CD8-positive, alpha-beta T cell (primary cell): ENCODE measurements at regions of chr5 and their contacts with region 1.

Region 1: GRCh38 chr5:160439205-160439600 is 17.5 kb downstream of the PTTG1 start:
- DNase-seq: peak; percentile 77 to 94 (median 89)
- ATAC-seq: peak; percentile 84
- H3K4me3 ChIP-seq: peak overlapping the region; percentile 66 to 72
- H3K4me3 Mint-ChIP-seq: peak overlapping the region; percentile 91
- H3K27ac ChIP-seq: peak overlapping the region; percentile 47 to 64
- H3K27ac Mint-ChIP-seq: peak overlapping the region; percentile 87
- H3K4me1 ChIP-seq: no peaks in the 10 kb centered on the region
- H3K4me1 Mint-ChIP-seq: peaks cover 7% of the 10 kb centered on the region
- H3K27me3 ChIP-seq: no peaks in the 10 kb centered on the region
- H3K27me3 Mint-ChIP-seq: peaks cover 10% of the 10 kb centered on the region
- CTCF ChIP-seq: peak; percentile 66

Region 2: DNA sequence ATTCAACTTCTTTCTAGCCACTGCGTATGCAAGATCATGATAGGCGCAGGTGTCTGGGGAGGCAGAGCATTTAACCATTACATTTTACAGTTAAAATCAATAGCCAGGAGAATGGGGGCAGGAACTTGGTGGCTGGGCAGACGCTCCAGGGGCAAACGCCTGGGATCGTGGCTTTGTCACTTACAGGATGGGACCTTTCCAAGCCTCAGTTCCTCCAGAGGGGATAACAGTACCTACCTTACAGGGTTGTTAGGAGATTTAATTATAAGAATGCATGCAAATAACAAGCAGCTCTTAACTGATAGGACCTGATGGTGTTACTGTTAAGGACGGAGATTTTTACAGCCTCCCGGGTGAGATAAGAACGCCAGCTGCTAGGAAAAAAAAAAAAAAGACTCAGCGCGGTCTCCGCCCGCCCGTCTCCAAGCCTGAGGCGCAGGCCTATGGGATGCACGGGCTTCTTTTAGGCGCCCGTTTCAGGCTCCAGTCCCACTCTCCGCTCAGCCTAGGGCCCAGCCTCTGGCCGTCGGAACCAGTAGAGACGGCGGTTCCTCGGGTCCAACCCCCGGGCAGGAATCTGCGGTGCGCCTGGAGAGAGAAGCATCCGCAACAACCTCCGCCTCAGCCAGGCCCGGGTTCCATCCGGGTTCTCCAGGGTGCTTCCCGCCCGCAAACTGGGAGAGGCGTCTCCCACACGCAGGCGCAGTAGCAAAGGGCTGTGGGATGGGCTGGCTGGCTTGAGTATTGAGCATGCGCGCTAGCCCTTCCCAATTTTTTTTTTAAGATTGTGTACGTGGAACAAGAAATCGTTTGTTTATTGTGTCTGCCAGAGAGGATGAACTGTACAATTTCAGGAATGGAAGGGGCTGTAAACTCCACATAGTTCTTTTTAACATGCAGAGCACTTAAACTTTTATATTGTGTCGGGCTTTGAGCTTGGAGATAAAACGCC is 39.5 kb before region 1 on chr5 and contains the start of gene FAM200C:
- CTCF ChIA-PET with region 1: interaction called, 10 read pairs
- POLR2A ChIA-PET with region 1: no interaction called
- intact Hi-C with region 1: no loop called
- DNase-seq: peak; percentile 15 to 85 (median 57)
- ATAC-seq: peak; percentile 73
- H3K4me3 ChIP-seq: peak within 1 kb of the TSS; percentile 60 to 86
- H3K4me3 Mint-ChIP-seq: peak within 1 kb of the TSS; percentile 91
- H3K27ac ChIP-seq: peak within 1 kb of the TSS; percentile 27 to 54
- H3K27ac Mint-ChIP-seq: peak within 1 kb of the TSS; percentile 57
- H3K4me1 ChIP-seq: peaks cover 7% of the 10 kb centered on the region
- H3K4me1 Mint-ChIP-seq: peaks cover 18% of the 10 kb centered on the region
- H3K27me3 ChIP-seq: no peaks in the 10 kb centered on the region
- H3K27me3 Mint-ChIP-seq: no peaks in the 10 kb centered on the region
- CTCF ChIP-seq: no peak
- total RNA-seq, gene FAM200C: 0.14 TPM in 1 of 2 experiments, not detected in the other

Region 3: DNA sequence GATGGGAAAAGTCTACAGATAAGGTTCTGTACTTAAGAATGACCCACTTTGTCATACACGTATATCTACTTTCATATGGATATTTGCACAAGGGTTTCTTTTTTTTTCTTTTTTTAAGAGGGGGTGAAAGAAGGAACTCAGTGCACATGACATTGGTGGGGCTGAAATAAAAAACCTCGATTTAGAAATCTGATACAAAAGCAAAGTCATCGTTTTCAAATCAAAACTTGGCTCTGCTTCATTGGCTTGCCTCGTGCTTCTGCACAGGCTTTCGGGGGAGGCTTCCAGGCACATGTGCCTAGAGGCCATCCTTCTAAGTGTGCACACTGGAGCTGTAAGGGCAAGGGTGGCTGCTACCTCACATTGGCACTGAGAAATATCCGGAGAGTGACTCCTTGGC is 13.6 kb after region 1 on chr5:
- CTCF ChIA-PET with region 1: interaction called, 14 read pairs
- POLR2A ChIA-PET with region 1: no interaction called
- intact Hi-C with region 1: no loop called
- DNase-seq: no peak
- ATAC-seq: no peak
- H3K4me3 ChIP-seq: no peak overlapping the region
- H3K4me3 Mint-ChIP-seq: no peak overlapping the region
- H3K27ac ChIP-seq: no peak overlapping the region
- H3K27ac Mint-ChIP-seq: no peak overlapping the region
- H3K4me1 ChIP-seq: no peaks in the 10 kb centered on the region
- H3K4me1 Mint-ChIP-seq: peaks cover 3% of the 10 kb centered on the region
- H3K27me3 ChIP-seq: no peaks in the 10 kb centered on the region
- H3K27me3 Mint-ChIP-seq: peaks cover 13% of the 10 kb centered on the region
- CTCF ChIP-seq: no peak

Region 4: DNA sequence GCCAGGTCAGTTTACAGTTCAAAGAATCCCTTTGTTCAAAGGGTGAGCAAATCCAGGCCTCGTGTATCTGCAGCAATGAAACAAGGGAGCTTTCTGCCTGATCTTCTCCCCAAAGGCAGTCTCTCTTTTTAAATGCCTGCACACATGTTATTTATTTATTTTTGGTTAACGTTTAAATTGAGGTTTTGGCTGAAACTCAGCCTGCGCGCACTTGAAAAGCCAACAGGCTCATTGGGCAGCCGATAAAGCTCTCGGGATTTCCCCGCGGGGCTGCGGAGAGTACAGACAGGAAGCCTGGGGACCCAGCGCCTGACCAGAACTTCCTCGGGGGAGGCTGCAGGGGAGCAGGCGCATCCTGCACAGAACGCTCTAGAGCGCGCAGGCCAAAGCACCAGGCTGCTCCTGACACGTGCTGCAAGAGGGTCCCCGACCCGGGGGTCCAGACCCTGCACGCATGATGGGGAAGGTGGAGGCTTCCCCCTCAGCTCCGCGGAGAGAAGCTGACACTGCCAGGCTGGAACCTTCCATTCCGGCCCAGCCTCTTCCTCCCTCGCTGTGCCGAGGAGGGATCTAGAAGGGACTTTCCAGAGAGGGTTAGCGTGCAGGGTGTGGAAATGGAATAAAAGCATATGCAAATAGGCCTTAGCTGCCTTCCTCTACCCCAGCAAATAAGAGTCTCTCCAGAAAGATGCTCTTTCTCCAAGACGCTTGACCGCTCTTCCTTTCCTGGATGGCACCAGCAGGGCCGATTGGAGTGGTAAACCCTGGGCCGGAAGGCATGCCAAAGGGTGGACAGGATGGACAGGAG is 28.6 kb after region 1 on chr5:
- CTCF ChIA-PET with region 1: interaction called, 37 read pairs
- POLR2A ChIA-PET with region 1: interaction called, 3 read pairs
- intact Hi-C with region 1: loop called in 1 of 2 experiments (anchors 1 kb)
- DNase-seq: peak; percentile 41 to 90 (median 76)
- ATAC-seq: peak; percentile 83
- H3K4me3 ChIP-seq: peak overlapping the region; percentile 67 to 70
- H3K4me3 Mint-ChIP-seq: peak overlapping the region; percentile 86
- H3K27ac ChIP-seq: peak overlapping the region; percentile 44 to 77
- H3K27ac Mint-ChIP-seq: peak overlapping the region; percentile 90
- H3K4me1 ChIP-seq: peaks cover 33% of the 10 kb centered on the region
- H3K4me1 Mint-ChIP-seq: peaks cover 62% of the 10 kb centered on the region
- H3K27me3 ChIP-seq: no peaks in the 10 kb centered on the region
- H3K27me3 Mint-ChIP-seq: no peaks in the 10 kb centered on the region
- CTCF ChIP-seq: no peak

Region 5: DNA sequence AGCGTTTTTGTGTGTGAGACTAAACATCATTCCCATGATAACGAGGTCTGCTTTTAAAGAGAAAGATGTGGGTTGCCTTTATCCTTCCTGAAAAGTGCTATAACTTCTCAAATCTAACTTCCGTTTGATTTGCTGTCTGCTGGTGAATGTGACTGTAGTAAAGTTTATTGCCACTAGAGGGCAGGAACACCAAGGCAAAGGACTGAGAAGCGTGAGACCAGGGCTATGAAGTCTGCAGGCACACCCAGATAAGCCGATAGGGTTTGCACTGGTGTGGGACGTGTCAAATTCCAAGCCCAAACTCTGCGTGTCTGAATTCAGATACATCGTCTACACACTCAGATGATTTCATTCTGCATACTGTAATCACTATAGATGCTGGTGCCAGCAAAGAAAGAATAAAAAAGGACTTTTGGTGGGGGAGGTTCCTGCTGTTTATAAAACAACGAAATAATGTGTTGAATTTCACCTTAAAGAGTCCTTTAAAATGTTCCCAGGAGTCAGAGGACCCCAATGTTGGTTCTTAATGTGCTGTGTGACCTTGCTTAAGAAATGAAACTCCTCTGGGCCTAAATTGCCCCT is 69.7 kb after region 1 on chr5:
- CTCF ChIA-PET with region 1: interaction called, 50 read pairs
- POLR2A ChIA-PET with region 1: no interaction called
- intact Hi-C with region 1: loop called (anchors 1 kb)
- DNase-seq: peak; percentile 10 to 90 (median 59)
- ATAC-seq: peak; percentile 86
- H3K4me3 ChIP-seq: no peak overlapping the region
- H3K4me3 Mint-ChIP-seq: no peak overlapping the region
- H3K27ac ChIP-seq: peak overlapping the region in 1 of 2 experiments; percentile 1
- H3K27ac Mint-ChIP-seq: no peak overlapping the region
- H3K4me1 ChIP-seq: peaks cover 17% of the 10 kb centered on the region
- H3K4me1 Mint-ChIP-seq: peaks cover 26% of the 10 kb centered on the region
- H3K27me3 ChIP-seq: peaks cover 0 to 9% of the 10 kb centered on the region in 2 experiments
- H3K27me3 Mint-ChIP-seq: peaks cover 9% of the 10 kb centered on the region
- CTCF ChIP-seq: peak; percentile 82

Region 6: DNA sequence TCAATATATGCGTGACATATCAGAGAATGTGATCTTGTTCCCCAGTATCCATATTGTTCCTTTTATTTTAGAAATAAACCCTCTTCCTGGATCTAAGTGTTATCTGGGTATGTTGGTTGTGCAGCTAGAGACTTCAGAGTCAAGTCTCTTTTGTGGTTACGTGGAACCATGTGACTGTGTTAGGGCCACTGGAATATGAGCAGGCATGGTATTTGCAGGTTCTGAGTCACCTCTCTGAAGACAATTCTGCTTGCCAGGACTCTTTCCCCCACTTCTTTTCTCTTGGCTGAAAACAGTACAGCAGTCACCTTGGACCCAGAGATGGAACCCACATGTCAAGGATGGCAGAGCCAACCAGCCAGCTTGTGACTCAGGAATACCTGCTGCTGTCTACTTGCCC is 353.1 kb after region 1 on chr5:
- CTCF ChIA-PET with region 1: interaction called, 8 read pairs
- POLR2A ChIA-PET with region 1: no interaction called
- intact Hi-C with region 1: loop called (anchors 2 to 5 kb)
- DNase-seq: no peak
- ATAC-seq: no peak
- H3K4me3 ChIP-seq: no peak overlapping the region
- H3K4me3 Mint-ChIP-seq: no peak overlapping the region
- H3K27ac ChIP-seq: no peak overlapping the region
- H3K27ac Mint-ChIP-seq: no peak overlapping the region
- H3K4me1 ChIP-seq: no peaks in the 10 kb centered on the region
- H3K4me1 Mint-ChIP-seq: no peaks in the 10 kb centered on the region
- H3K27me3 ChIP-seq: no peaks in the 10 kb centered on the region
- H3K27me3 Mint-ChIP-seq: no peaks in the 10 kb centered on the region
- CTCF ChIP-seq: no peak